Transverse colon (tissue), 4 donors: ENCODE measurements at regions of chr16 and their contacts with region 1.

Region 1: GRCh38 chr16:73058221-73058615 is 10.3 kb upstream of the ZFHX3 start:
- DNase-seq: peak; percentile 58
- H3K4me3 ChIP-seq: peak overlapping the region; percentile 64 to 96 (median 94)
- H3K27ac ChIP-seq: peak overlapping the region; percentile 92 to 96 (median 96)
- H3K4me1 ChIP-seq: peaks cover 15 to 61% (median 45%) of the 10 kb centered on the region in 4 donors
- H3K27me3 ChIP-seq: peaks cover 19% of the 10 kb centered on the region
- CTCF ChIP-seq: peak in 1 of 5 experiments; percentile 8
- EP300 ChIP-seq: no peak
- POLR2A ChIP-seq: no peak

Region 2: GRCh38 chr16:72664509-72665225 is 393.6 kb before region 1 on chr16:
- in situ Hi-C with region 1: loop called in 1 of 4 experiments (anchors 25 kb)
- intact Hi-C with region 1: no loop called
- DNase-seq: peak; percentile 97
- H3K4me3 ChIP-seq: peak overlapping the region; percentile 69 to 98 (median 86)
- H3K27ac ChIP-seq: peak overlapping the region; percentile 52 to 86 (median 81)
- H3K4me1 ChIP-seq: peaks cover 6 to 16% (median 8%) of the 10 kb centered on the region in 4 donors
- H3K27me3 ChIP-seq: no peaks in the 10 kb centered on the region
- CTCF ChIP-seq: no peak
- EP300 ChIP-seq: no peak
- POLR2A ChIP-seq: peak; percentile 18